IMR-90 (cell line): ENCODE measurements at regions of chr4 and their contacts with region 1.

Region 1: GRCh38 chr4:110211007-110211769 is 12.8 kb upstream of the ELOVL6 start:
- DNase-seq: peak; percentile 63
- ATAC-seq: peak; percentile 48
- H3K4me3 ChIP-seq: no peak overlapping the region
- H3K27ac ChIP-seq: no peak overlapping the region
- H3K4me1 ChIP-seq: no peaks in the 10 kb centered on the region
- H3K27me3 ChIP-seq: no peaks in the 10 kb centered on the region; the same call in 1 of the 2 replicates
- CTCF ChIP-seq: peak; percentile 85
- POLR2A ChIP-seq: no peak
- RAD21 ChIP-seq: peak; percentile 85

Region 2: DNA sequence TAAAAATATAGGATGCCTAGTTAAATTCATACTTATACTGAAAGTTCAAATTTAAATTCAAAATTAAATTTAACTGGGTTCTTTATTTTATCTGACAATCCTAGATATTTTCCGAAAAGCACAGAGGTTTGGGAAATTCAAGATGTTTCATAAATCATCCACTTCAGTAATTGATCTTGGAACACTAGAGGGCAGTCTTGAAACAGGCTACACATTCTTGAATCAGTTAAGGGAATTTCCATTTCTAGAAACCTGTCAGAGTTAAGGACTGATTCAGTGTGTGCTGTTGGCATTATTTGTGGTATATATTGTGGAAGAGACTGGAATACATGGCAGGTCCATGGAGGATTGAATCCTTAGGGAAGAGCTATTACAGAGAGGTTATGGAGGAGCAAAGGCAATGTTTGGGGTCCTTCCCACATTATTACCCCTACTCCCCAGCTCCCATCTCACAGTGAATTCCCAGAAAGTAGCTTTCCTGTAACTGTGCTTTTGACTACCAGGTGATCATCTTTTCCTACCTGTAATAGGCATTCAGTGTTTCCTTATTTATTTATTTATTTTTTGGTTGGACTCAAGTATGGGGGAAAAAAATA is 205.6 kb before region 1 on chr4:
- CTCF ChIA-PET with region 1: no interaction called
- POLR2A ChIA-PET with region 1: no interaction called
- dilution Hi-C with region 1: no loop called
- in situ Hi-C with region 1: loop called (anchors 5 kb)
- intact Hi-C with region 1: loop called (anchors 1 kb)
- DNase-seq: peak; percentile 78
- ATAC-seq: peak; percentile 67
- H3K4me3 ChIP-seq: no peak overlapping the region
- H3K27ac ChIP-seq: no peak overlapping the region
- H3K4me1 ChIP-seq: no peaks in the 10 kb centered on the region
- H3K27me3 ChIP-seq: no peaks in the 10 kb centered on the region
- CTCF ChIP-seq: peak; percentile 95
- POLR2A ChIP-seq: no peak
- RAD21 ChIP-seq: peak; percentile 95

Region 3: DNA sequence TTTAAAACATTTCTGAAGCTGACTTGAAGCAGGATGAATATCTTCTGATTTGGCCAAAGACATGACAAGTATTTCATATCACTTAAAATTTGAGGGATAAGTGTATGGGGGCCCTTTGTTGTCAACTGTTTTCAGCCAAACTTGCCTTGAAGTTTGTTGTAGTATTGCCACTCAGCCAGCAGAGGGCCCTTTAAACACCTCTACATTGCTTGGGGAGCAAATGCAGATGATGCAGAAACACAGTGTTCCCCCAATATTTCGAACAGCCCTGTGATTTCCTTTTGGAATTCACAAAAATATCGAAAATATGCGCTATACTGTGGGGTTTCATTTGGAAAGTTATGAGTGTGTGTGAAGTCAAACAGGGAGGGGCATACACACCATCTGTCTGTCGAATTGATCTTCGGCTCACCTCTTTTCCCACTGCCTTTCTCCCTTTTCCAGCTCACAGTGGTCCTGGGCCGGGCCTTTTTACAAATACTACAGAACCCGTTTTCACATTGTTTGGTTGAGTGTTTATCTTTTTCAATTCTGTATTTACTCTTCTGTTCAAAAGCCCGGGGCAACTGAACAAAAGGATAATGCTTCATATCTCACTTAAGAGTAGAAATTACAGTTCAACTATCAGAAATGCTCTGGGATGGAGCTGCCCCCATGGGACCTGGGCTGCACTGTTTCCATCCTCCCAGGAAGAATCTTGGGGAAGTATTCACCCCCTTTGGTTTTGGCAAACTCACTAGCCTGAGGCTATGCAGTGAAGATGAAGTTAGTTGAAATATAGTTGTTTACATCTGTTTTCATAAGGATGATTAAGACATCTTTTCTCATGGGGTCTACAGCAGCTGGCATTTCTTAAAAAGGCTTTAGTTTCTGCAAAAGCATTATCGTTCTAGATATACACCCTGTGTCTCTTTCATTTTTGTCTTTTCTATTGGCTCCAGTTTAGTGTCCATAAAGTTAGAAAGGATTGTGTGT is 160.9 kb before region 1 on chr4:
- CTCF ChIA-PET with region 1: interaction called, 3 read pairs
- POLR2A ChIA-PET with region 1: no interaction called
- dilution Hi-C with region 1: no loop called
- in situ Hi-C with region 1: no loop called
- intact Hi-C with region 1: loop called (anchors 1 kb)
- DNase-seq: peak; percentile 52
- ATAC-seq: peak; percentile 78
- H3K4me3 ChIP-seq: no peak overlapping the region
- H3K27ac ChIP-seq: no peak overlapping the region
- H3K4me1 ChIP-seq: peaks cover 3% of the 10 kb centered on the region; the same call in 1 of the 2 replicates
- H3K27me3 ChIP-seq: no peaks in the 10 kb centered on the region
- CTCF ChIP-seq: peak; percentile 83
- POLR2A ChIP-seq: no peak
- RAD21 ChIP-seq: peak; percentile 84

Region 4: GRCh38 chr4:110231869-110232268 is 20.7 kb after region 1 on chr4:
- CTCF ChIA-PET with region 1: no interaction called
- POLR2A ChIA-PET with region 1: no interaction called
- dilution Hi-C with region 1: no loop called
- in situ Hi-C with region 1: no loop called
- intact Hi-C with region 1: no loop called
- DNase-seq: no peak
- ATAC-seq: no peak
- H3K4me3 ChIP-seq: no peak overlapping the region
- H3K27ac ChIP-seq: no peak overlapping the region
- H3K4me1 ChIP-seq: no peaks in the 10 kb centered on the region
- H3K27me3 ChIP-seq: no peaks in the 10 kb centered on the region
- CTCF ChIP-seq: no peak
- POLR2A ChIP-seq: no peak
- RAD21 ChIP-seq: no peak